HEK293T (cell line): ENCODE measurements at regions of chrX and their contacts with region 1.

Region 1: GRCh38 chrX:103464774-103465117 is 54.5 kb downstream of the RAB40A start:
- DNase-seq: peak; percentile 78

Region 2: DNA sequence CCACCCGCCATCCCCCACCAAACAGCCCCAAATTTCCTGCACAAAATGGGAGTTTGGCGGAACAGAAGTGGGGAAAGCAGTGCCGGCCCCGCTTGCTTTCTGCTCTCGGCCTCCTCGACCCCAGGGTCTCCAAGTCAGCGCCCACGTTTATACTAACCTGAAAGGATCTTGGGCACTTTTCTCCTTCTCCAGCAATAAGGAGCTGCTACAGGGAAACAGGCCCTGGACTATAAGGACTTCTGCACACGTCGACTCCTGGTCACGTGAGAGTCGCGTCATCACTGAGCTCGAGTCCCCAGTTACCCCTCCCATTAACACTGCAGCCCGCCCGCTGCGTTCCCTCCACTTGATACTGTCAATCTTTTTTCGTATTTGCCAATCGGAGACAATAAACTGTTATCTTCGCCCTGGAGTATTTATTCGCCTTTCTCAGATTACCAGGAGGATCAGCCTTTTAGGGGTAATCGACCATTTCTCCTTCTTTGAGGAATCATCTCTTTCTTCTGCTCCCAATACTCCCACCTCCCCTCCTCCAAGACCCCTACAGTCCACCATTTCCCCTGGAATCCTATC is 209.7 kb before region 1 on chrX and contains the start of gene TCEAL8:
- CTCF ChIA-PET with region 1: interaction called, 6 read pairs
- POLR2A ChIA-PET with region 1: interaction called, 18 read pairs
- DNase-seq: peak; percentile 88

Region 3: GRCh38 chrX:103356130-103356798 is 108.5 kb before region 1 on chrX and contains the start of gene TCEAL9:
- CTCF ChIA-PET with region 1: interaction called, 11 read pairs
- POLR2A ChIA-PET with region 1: interaction called, 12 read pairs
- DNase-seq: peak; percentile 72

Region 4: DNA sequence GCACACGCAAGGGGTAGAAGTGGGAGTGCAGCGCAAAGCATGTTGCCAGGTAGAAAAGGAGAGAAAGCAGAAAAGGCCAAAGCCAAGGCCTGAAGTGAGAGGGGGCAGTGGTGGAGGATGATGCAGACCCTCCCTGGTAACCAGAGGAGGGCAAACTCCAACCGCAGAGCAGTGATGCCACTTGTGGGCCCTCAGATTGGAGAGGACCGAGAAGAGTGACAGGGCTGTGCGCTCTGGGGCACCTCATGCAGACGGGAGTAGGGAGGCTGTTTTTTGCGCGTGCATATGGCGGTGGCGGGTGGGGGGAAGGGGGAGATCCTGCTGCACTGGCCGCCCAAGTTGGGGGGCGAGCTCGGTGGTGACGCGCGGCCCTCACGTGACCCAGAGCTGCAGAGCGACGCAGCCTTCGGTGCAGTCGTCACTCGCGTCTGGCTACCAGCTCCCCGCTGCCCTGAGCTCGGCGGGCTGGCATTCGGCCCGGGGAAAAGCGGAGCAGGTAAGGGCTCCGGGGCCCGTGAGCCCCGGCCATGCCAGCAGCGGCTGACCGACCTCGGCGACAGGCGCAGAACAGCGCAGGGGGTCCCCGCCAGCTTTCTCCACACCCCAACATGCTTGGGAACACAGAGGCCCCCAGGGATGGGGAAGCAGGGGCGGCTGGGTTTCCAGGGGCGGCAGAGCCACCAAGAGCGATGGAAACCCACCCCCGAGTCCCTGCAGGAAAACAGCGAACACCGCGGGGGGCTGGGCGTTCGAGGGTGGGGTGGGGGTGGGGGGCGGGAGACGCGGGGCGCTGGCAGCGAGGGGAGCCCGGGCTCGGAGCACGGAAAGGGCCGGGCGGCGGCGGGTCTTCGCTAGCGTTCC is 88.4 kb before region 1 on chrX and contains the start of gene BEX3:
- CTCF ChIA-PET with region 1: interaction called, 4 read pairs
- POLR2A ChIA-PET with region 1: interaction called, 13 read pairs
- DNase-seq: peak; percentile 69

Region 5: DNA sequence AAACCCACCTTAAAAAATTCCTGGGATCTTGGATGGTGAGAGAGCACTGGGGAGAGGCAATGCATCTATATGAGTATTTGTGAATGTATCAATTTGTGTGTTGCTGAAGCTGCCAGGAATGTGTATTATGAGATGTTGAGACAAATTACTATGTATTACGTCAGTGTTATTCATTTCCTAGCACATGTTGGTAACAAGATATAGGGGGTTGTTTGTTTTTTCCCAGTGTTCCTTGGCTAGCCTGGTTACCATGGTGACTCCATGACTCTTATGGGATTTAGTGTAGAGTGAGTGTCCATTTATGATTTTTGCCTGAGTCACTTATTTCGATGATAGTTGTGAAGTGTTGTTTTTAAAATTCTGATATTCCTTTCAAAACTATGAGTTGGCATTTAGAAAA is 11.1 kb before region 1 on chrX:
- CTCF ChIA-PET with region 1: no interaction called
- POLR2A ChIA-PET with region 1: no interaction called
- DNase-seq: no peak